ENCODE measurements at regions of chr4 and their contacts with region 1.

Region 1: GRCh38 chr4:18593445-18594002 is 572.0 kb upstream of the LCORL start:
- DNase-seq: no peak
- H3K4me3 ChIP-seq: no peak overlapping the region
- H3K27ac ChIP-seq: no peak overlapping the region
- H3K4me1 ChIP-seq: peaks cover 0 to 5% (median 0%) of the 10 kb centered on the region in 4 donors
- H3K27me3 ChIP-seq: peaks cover 0 to 8% (median 0%) of the 10 kb centered on the region in 4 donors
- CTCF ChIP-seq: peak; percentile 61 to 84 (median 76)
- EP300 ChIP-seq: no peak
- POLR2A ChIP-seq: no peak

Region 2: GRCh38 chr4:17544831-17545234 is 1048.7 kb before region 1 on chr4:
- intact Hi-C with region 1: loop called (anchors 5 kb)
- DNase-seq: no peak
- H3K4me3 ChIP-seq: no peak overlapping the region
- H3K27ac ChIP-seq: no peak overlapping the region
- H3K4me1 ChIP-seq: no peaks in the 10 kb centered on the region
- H3K27me3 ChIP-seq: no peaks in the 10 kb centered on the region
- CTCF ChIP-seq: no peak
- EP300 ChIP-seq: no peak
- POLR2A ChIP-seq: no peak

Region 3: GRCh38 chr4:17817020-17817419 is 776.5 kb before region 1 on chr4:
- intact Hi-C with region 1: loop called (anchors 1 kb)
- DNase-seq: no peak
- H3K4me3 ChIP-seq: no peak overlapping the region
- H3K27ac ChIP-seq: no peak overlapping the region
- H3K4me1 ChIP-seq: no peaks in the 10 kb centered on the region
- H3K27me3 ChIP-seq: no peaks in the 10 kb centered on the region
- CTCF ChIP-seq: peak; percentile 41 to 53 (median 47)
- EP300 ChIP-seq: no peak
- POLR2A ChIP-seq: no peak

Region 4: DNA sequence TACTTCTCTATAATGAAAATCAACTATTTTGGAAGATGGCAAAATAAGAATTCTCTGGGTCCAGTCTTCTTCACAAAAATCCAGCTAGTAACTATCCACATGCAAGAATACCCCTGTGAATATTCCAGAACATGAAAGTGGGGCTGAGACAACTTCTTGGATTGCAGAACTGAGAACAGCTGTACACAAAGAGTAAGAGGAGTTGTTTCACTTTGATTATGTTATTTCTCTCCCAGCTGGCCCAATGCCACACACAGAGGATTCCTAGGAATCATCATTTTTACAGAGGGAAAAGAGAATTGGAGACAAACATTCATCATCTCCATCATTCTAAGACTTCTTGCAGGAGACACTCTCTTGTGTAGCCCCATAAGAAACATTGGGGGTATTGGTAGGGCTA is 210.3 kb after region 1 on chr4:
- intact Hi-C with region 1: no loop called
- DNase-seq: no peak
- H3K4me3 ChIP-seq: no peak overlapping the region
- H3K27ac ChIP-seq: no peak overlapping the region
- H3K4me1 ChIP-seq: no peaks in the 10 kb centered on the region
- H3K27me3 ChIP-seq: no peaks in the 10 kb centered on the region
- CTCF ChIP-seq: no peak
- EP300 ChIP-seq: no peak
- POLR2A ChIP-seq: no peak

Measured in esophagus muscularis mucosa (tissue), 4 donors.